ENCODE measurements at regions of chr5 and their contacts with region 1.

Region 1: GRCh38 chr5:121968910-121969607 is 7.3 kb downstream of the SRFBP1 start:
- DNase-seq: no peak
- ATAC-seq: no peak
- H3K4me3 ChIP-seq: no peak overlapping the region
- H3K4me3 Mint-ChIP-seq: no peak overlapping the region
- H3K27ac ChIP-seq: no peak overlapping the region
- H3K27ac Mint-ChIP-seq: no peak overlapping the region
- H3K4me1 ChIP-seq: no peaks in the 10 kb centered on the region
- H3K4me1 Mint-ChIP-seq: peaks cover 43% of the 10 kb centered on the region
- H3K27me3 ChIP-seq: no peaks in the 10 kb centered on the region
- H3K27me3 Mint-ChIP-seq: no peaks in the 10 kb centered on the region
- CTCF ChIP-seq: no peak

Region 2: GRCh38 chr5:122007546-122007945 is 38.5 kb after region 1 on chr5:
- CTCF ChIA-PET with region 1: no interaction called
- POLR2A ChIA-PET with region 1: no interaction called
- intact Hi-C with region 1: no loop called
- DNase-seq: no peak
- ATAC-seq: no peak
- H3K4me3 ChIP-seq: no peak overlapping the region
- H3K4me3 Mint-ChIP-seq: no peak overlapping the region
- H3K27ac ChIP-seq: no peak overlapping the region
- H3K27ac Mint-ChIP-seq: no peak overlapping the region
- H3K4me1 ChIP-seq: no peaks in the 10 kb centered on the region
- H3K4me1 Mint-ChIP-seq: peaks cover 40% of the 10 kb centered on the region
- H3K27me3 ChIP-seq: no peaks in the 10 kb centered on the region
- H3K27me3 Mint-ChIP-seq: no peaks in the 10 kb centered on the region
- CTCF ChIP-seq: no peak

Region 3: GRCh38 chr5:122156724-122157325 is 187.8 kb after region 1 on chr5:
- CTCF ChIA-PET with region 1: no interaction called
- POLR2A ChIA-PET with region 1: no interaction called
- intact Hi-C with region 1: loop called in 1 of 2 experiments (anchors 5 kb)
- DNase-seq: peak in 1 of 9 experiments; percentile 13
- ATAC-seq: no peak
- H3K4me3 ChIP-seq: no peak overlapping the region
- H3K4me3 Mint-ChIP-seq: no peak overlapping the region
- H3K27ac ChIP-seq: no peak overlapping the region
- H3K27ac Mint-ChIP-seq: no peak overlapping the region
- H3K4me1 ChIP-seq: peaks cover 6% of the 10 kb centered on the region
- H3K4me1 Mint-ChIP-seq: peaks cover 6% of the 10 kb centered on the region
- H3K27me3 ChIP-seq: no peaks in the 10 kb centered on the region
- H3K27me3 Mint-ChIP-seq: no peaks in the 10 kb centered on the region
- CTCF ChIP-seq: peak; percentile 14

Region 4: DNA sequence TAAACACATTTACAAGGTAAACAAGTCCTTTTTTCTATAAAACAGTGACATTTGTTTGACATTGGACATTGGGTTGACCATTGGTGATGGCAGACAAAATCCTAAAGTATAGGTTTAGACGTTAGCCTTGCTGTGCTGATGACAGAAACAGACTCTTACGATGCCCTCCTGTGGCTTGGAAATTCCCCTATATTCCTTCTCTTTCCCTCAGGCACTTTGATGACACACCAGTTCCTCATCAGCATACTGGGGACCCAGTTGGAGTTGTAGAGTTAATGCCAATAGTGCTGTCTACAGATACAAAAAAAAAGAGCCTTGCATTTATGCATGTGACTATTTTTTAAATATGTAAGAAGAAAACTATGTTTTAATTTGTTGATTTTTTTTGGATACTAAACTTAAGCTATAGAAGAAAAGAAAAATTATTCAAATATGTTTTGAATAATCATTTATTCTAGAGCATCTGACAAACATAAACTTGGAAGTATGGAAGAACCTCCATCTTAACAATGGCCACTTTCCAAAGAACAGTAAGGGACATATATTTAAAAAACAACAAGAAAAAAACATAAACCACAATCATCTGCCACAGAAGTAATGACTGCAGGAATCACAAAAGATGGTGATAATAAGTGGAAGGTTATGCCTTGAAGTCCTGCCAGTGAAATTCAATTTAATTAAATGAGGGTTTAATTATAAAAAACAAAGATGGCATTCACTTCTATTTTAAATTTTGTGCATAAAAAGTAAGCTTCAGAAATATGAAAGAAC is 267.4 kb after region 1 on chr5:
- CTCF ChIA-PET with region 1: no interaction called
- POLR2A ChIA-PET with region 1: no interaction called
- intact Hi-C with region 1: no loop called
- DNase-seq: no peak
- ATAC-seq: no peak
- H3K4me3 ChIP-seq: no peak overlapping the region
- H3K4me3 Mint-ChIP-seq: no peak overlapping the region
- H3K27ac ChIP-seq: no peak overlapping the region
- H3K27ac Mint-ChIP-seq: no peak overlapping the region
- H3K4me1 ChIP-seq: no peaks in the 10 kb centered on the region
- H3K4me1 Mint-ChIP-seq: no peaks in the 10 kb centered on the region
- H3K27me3 ChIP-seq: no peaks in the 10 kb centered on the region
- H3K27me3 Mint-ChIP-seq: no peaks in the 10 kb centered on the region
- CTCF ChIP-seq: no peak

Region 5: DNA sequence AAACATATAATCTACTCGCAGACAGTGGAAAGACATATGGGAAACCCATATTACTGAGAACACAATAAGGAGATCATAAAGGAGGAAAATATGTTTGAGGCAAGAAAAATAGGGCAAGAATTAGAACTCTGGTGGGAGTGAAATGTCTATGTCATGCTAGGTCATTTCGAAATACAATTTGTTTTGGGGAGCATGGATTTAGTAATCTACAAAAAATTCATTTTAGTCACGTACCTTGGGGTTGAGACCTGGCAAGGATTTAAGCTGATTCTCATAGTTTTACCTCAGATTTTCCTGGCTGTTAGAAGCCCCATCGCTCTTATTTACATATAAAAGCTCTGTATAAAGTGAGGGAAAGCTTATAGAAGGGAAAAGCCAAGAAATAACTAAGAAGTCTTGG is 1531.4 kb after region 1 on chr5:
- CTCF ChIA-PET with region 1: no interaction called
- POLR2A ChIA-PET with region 1: no interaction called
- intact Hi-C with region 1: no loop called
- DNase-seq: no peak
- ATAC-seq: no peak
- H3K4me3 ChIP-seq: no peak overlapping the region
- H3K4me3 Mint-ChIP-seq: no peak overlapping the region
- H3K27ac ChIP-seq: no peak overlapping the region
- H3K27ac Mint-ChIP-seq: no peak overlapping the region
- H3K4me1 ChIP-seq: no peaks in the 10 kb centered on the region
- H3K4me1 Mint-ChIP-seq: peaks cover 2% of the 10 kb centered on the region
- H3K27me3 ChIP-seq: no peaks in the 10 kb centered on the region
- H3K27me3 Mint-ChIP-seq: no peaks in the 10 kb centered on the region
- CTCF ChIP-seq: no peak